ENCODE measurements at regions of chr1 and their contacts with region 1.

Region 1: GRCh38 chr1:15598436-15598835 is 13.6 kb upstream of the AGMAT start:
- DNase-seq: no peak
- ATAC-seq: no peak

Region 2: GRCh38 chr1:15656464-15656863 is 58.0 kb after region 1 on chr1:
- intact Hi-C with region 1: no loop called
- DNase-seq: no peak
- ATAC-seq: peak; percentile 88

Region 3: DNA sequence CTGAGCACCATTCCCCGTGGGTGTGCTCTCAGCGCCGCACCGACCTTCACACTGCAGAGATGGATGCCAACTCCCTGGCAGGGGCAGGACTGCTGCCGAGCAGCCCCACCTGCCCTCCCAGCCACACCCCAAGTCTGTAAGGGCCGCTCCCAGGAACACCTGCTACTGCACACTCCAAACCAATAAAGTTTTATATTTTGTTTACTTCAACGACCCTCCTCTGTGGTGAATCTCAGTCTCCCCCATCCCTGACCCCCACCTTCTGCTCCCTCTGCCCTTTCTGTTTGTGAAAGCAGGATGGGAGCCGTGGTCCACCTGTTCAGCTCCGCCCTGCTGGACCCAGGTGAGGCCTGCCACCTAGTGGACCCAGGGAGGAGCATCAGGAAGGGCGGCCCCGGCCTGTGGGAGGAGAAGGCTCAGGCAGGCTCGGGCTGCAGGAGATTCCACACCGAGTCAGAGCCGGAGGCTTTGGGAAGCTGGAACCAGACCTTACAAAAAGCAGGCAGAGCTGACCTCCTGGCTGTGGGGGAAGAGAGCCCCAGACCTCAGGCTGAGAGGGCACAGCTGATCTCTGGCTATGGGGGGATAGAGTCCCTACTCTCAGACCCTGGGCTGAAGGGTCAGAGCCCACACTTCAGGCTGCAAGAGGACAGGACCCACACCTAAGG is 142.9 kb after region 1 on chr1:
- intact Hi-C with region 1: loop called (anchors 5 kb)
- DNase-seq: peak; percentile 86
- ATAC-seq: peak; percentile 78

Region 4: GRCh38 chr1:15788624-15789301 is 190.3 kb after region 1 on chr1:
- intact Hi-C with region 1: no loop called
- DNase-seq: no peak
- ATAC-seq: no peak

Measured in Right ventricle myocardium superior (tissue), 1 donor.